Testis (tissue), 5 donors: ENCODE measurements at regions of chr6 and their contacts with region 1.

Region 1: DNA sequence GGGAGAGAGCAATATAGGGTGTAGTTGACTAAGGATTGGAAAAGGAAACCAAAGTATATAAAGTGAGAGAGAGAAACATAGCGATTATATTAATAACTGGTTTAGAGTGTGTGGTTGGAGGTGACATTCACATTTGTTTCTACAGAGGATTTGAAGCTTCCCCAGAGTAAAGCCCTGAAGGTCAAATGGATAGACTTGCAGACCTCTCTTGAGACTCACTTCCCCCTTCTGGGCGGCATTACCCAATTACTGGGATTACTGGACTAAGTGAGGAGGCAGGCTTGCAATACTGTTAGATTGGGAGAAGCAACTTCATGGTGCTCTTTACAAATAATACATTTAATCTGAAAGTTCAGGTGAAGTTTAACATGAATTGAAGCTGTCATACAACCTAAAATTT is 10.7 kb downstream of the FIG4 start:
- DNase-seq: no peak
- H3K4me3 ChIP-seq: no peak overlapping the region
- H3K27ac ChIP-seq: no peak overlapping the region
- H3K4me1 ChIP-seq: no peaks in the 10 kb centered on the region
- H3K27me3 ChIP-seq: no peaks in the 10 kb centered on the region
- CTCF ChIP-seq: no peak
- POLR2A ChIP-seq: no peak

Region 2: DNA sequence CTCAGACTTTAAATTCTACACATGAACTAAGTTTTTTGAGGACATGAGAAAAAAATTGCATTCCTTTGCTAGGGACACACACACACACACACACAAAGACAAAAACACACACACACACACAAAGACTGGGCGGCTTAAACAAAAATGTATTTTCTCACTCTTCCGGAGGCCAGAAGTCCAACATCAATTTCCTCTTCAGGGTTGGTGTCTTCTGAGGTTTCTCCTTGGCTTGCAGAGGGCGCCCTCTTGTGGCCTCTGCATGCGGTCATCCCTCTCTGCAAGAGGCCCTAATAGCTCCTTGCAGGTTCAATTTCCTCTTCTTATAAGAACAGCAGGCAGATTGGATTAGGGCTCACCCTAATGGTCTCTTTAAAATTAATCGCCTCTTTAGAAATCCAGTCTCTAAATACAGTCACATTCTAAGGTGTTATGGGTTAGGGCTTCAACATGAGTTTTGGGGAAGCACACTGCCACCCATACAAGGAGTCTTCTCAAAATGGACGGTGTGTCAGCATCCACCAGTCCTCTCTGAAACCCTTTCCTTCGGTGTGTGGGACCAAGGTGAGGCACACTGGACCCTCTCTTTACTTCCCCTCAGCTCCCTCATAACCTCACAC is 337.7 kb after region 1 on chr6:
- intact Hi-C with region 1: loop called (anchors 5 kb)
- DNase-seq: peak; percentile 94
- H3K4me3 ChIP-seq: peak overlapping the region; percentile 21 to 57
- H3K27ac ChIP-seq: peak overlapping the region; percentile 36 to 48
- H3K4me1 ChIP-seq: peaks cover 6% of the 10 kb centered on the region
- H3K27me3 ChIP-seq: no peaks in the 10 kb centered on the region
- CTCF ChIP-seq: peak; percentile 86 to 93 (median 90)
- POLR2A ChIP-seq: no peak